Psoas muscle (tissue), 8 donors: ENCODE measurements at regions of chr1 and their contacts with region 1.

Region 1: GRCh38 chr1:31789259-31790065 is 25.3 kb upstream of the ADGRB2 start:
- DNase-seq: peak; percentile 95 to 97
- ATAC-seq: peak; percentile 91 to 96 (median 94)
- H3K4me3 ChIP-seq: peak overlapping the region; percentile 78
- H3K27ac ChIP-seq: no peak overlapping the region
- H3K4me1 ChIP-seq: peaks cover 4% of the 10 kb centered on the region
- H3K27me3 ChIP-seq: no peaks in the 10 kb centered on the region
- CTCF ChIP-seq: peak; percentile 78

Region 2: GRCh38 chr1:31564134-31564989 is 225.1 kb before region 1 on chr1:
- intact Hi-C with region 1: loop called (anchors 5 to 10 kb)
- DNase-seq: no peak
- ATAC-seq: peak; percentile 66 to 89 (median 76)
- H3K4me3 ChIP-seq: no peak overlapping the region
- H3K27ac ChIP-seq: no peak overlapping the region
- H3K4me1 ChIP-seq: peaks cover 4% of the 10 kb centered on the region
- H3K27me3 ChIP-seq: no peaks in the 10 kb centered on the region
- CTCF ChIP-seq: peak; percentile 95

Region 3: DNA sequence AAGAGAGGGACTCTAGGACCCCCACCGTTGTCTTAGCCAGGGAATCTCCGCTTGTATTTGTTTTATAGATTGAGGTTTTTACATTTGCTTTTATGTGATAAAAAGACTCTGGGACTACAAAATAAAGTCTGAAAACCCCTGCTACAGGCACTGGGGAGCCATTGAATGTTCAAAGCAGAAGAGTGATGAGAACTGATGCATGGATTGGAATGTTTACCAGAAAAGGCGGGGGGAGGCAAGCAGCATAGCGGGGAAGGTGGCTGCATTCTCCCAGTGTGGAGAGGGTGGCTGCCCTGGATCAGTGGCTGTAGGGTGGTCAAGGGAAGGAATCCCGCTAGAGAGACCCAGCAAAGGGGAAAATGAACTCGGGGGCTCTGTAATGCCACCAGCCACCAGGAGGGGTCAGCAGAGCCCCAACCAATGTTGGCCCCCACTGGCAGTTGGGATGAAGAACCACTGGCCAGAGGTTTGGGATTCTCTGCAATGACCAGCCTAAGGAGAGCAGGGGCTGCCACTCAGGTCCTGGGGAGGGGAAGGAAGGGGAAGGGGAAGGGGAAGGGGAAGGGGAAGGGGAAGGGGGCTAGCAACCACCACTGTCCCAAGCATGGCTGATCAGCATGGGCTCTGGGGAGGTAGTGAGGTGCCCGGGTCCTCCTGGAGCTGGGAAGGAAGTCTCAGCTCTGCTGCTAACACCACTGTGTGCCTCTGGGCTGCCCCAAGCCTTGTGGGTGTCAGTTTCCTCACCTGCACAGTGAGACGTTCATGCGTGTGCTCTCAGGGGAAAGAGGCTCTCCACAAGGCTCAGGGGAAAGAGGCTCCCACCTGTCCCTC is 125.6 kb before region 1 on chr1:
- intact Hi-C with region 1: loop called (anchors 1 to 2 kb)
- DNase-seq: peak; percentile 57 to 77
- ATAC-seq: peak; percentile 65 to 85 (median 78)
- H3K4me3 ChIP-seq: no peak overlapping the region
- H3K27ac ChIP-seq: no peak overlapping the region
- H3K4me1 ChIP-seq: no peaks in the 10 kb centered on the region
- H3K27me3 ChIP-seq: no peaks in the 10 kb centered on the region
- CTCF ChIP-seq: peak; percentile 86

Region 4: GRCh38 chr1:31715087-31715872 is 74.2 kb before region 1 on chr1:
- intact Hi-C with region 1: loop called (anchors 2 kb)
- DNase-seq: peak; percentile 96 to 98
- ATAC-seq: peak; percentile 93 to 96 (median 94)
- H3K4me3 ChIP-seq: peak overlapping the region; percentile 66
- H3K27ac ChIP-seq: peak overlapping the region; percentile 91
- H3K4me1 ChIP-seq: peaks cover 12% of the 10 kb centered on the region
- H3K27me3 ChIP-seq: no peaks in the 10 kb centered on the region
- CTCF ChIP-seq: peak; percentile 82

Region 5: DNA sequence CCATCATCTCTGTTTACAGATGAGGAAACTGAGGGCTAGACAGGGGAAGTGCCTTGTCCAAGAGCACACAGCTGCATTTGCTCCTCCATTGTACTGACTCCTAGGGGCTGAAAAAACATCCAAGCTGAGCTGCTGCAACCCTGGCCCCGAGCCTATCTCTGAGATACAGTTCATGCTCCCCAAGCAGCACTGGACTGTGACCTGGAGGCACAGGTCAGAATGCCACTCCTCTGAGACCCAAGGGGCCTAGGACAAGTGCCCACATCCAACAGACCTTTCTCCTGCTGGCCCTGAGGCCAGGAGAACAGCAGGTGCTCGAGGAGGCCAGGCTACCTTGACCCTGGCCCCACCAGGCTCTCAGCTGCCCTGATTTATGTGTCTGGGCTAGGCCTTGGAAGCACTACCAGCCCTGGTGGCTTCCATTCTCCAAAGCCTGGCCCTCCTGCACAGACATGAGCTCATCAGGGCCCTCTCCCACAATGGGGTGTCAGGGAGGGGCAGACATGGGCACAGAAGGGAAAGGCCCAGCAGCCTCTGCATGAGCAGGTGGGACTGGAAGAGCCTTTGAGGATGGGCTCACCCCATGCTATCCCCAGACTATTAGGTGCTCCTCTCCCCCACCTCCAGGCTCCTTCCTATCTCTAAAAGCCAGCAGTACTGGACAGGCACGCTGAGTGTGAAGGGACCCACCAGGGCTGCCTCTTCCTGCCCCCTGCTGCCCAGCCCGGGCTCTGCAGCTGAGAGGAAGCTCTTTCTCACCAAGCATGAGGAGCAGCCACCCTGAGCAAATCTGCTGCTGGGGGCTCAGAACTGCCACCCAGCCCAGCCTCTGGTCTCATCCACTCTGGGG is 44.1 kb before region 1 on chr1:
- intact Hi-C with region 1: no loop called
- DNase-seq: peak; percentile 73 to 78
- ATAC-seq: peak; percentile 80 to 89 (median 84)
- H3K4me3 ChIP-seq: no peak overlapping the region
- H3K27ac ChIP-seq: no peak overlapping the region
- H3K4me1 ChIP-seq: no peaks in the 10 kb centered on the region
- H3K27me3 ChIP-seq: no peaks in the 10 kb centered on the region
- CTCF ChIP-seq: peak; percentile 69

Region 6: GRCh38 chr1:31762726-31763670 is 26.5 kb before region 1 on chr1:
- intact Hi-C with region 1: loop called in 1 of 2 experiments (anchors 2 kb)
- DNase-seq: peak; percentile 70 to 83
- ATAC-seq: peak; percentile 65 to 92 (median 78)
- H3K4me3 ChIP-seq: peak overlapping the region; percentile 70
- H3K27ac ChIP-seq: no peak overlapping the region
- H3K4me1 ChIP-seq: peaks cover 11% of the 10 kb centered on the region
- H3K27me3 ChIP-seq: peaks cover 0 to 28% (median 23%) of the 10 kb centered on the region in 3 donors
- CTCF ChIP-seq: peak; percentile 57

Region 7: GRCh38 chr1:31955917-31956736 is 166.7 kb after region 1 on chr1:
- intact Hi-C with region 1: loop called in 1 of 2 experiments (anchors 10 kb)
- DNase-seq: peak; percentile 77 to 90
- ATAC-seq: peak; percentile 79 to 87 (median 82)
- H3K4me3 ChIP-seq: peak overlapping the region; percentile 36
- H3K27ac ChIP-seq: peak overlapping the region; percentile 97
- H3K4me1 ChIP-seq: peaks cover 49% of the 10 kb centered on the region
- H3K27me3 ChIP-seq: no peaks in the 10 kb centered on the region
- CTCF ChIP-seq: peak; percentile 45